Activated T-helper 2 cell treated with anti-CD3 and anti-CD28 coated beads, Interferon-gamma antibody, Interleukin-2, Interleukin-4, amounts not matched to agents 10 μg/mL and 5 μg/mL and 100 μg/mL, durations not matched to agents 14 hours and 24 hours and 36 hours (primary cell): ENCODE measurements at regions of chr2 and their contacts with region 1.

Region 1: DNA sequence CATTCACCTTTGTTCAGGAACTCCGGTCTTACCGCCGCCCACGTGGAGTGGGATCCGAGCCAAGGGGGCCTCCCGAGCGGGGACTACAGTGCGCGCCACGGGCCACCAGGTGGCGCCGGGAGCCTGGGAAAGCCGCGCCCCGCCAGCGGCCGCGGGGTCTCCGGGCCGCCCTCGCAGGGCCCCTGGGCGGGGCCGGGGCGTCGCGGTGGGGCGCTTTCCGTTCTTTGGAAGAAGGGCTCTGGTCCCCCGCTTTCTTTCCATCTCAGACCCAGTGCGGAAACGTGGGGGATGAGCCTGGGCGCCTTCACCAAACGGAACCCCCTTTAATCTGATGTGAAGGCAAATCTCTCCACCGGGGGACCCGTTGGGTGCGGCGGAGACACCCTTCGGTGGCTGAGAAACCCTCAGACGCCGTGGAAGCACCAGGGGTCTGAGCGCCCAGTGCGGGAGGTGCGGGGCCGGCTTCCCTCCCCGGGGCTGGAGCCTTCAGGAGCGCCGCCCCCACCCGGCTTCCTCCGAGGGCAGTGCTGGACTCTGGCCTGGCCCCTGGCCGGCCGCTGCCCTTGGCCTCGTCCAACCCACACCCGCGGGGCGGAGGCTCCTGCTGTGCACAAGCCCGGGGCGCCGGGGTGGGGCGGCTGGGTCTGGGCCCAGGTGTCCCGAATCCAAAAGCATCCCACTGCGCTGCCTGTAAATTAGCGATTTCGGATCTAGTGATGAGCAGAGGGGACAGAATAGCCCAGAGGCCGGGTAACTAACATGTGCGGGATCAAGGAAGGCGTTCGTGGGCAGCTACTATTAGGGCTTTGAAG is 44.6 kb downstream of the GORASP2 start:
- DNase-seq: peak; percentile 75
- H3K4me3 Mint-ChIP-seq: peak overlapping the region; percentile 76
- H3K27ac Mint-ChIP-seq: peak overlapping the region; percentile 63
- H3K4me1 Mint-ChIP-seq: peaks cover 10% of the 10 kb centered on the region
- H3K27me3 Mint-ChIP-seq: no peaks in the 10 kb centered on the region

Region 2: GRCh38 chr2:170950221-170950761 is 23.4 kb before region 1 on chr2:
- intact Hi-C with region 1: no loop called
- DNase-seq: no peak
- H3K4me3 Mint-ChIP-seq: no peak overlapping the region
- H3K27ac Mint-ChIP-seq: no peak overlapping the region
- H3K4me1 Mint-ChIP-seq: peaks cover 9% of the 10 kb centered on the region
- H3K27me3 Mint-ChIP-seq: no peaks in the 10 kb centered on the region

Region 3: DNA sequence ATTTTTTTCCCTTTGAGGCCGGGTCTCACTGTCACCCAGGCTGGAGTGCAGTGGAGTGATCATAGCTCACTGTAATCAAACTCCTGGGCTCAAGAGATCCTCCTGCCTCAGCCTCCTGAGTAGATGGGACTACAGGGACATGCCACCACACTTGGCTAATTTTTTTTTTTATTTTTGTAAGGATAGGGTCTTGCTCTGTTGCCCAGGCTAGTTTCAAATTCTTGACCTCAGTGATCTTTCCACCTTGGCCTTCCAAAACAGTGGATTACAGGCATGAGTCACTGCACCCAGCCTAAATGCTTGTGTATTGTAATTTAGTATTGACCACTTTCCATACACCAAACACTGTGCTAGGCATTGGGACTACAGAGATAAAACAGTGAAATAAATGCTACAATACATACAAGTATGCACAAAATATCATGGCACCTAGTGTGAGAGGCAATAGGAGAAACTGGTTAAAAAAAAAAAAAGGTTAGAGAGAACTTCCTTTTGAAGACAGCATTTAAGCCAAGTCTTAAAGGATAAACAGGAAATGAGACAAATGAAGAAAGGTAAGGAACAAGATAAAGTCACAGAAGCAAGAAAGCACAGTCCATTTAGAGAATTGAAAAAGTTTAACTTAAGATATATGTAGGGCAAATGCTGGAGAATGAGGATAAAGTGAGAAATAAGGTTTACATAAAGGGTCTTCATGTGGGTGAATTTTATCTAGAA is 68.7 kb after region 1 on chr2:
- intact Hi-C with region 1: no loop called
- DNase-seq: no peak
- H3K4me3 Mint-ChIP-seq: peak overlapping the region; percentile 10
- H3K27ac Mint-ChIP-seq: peak overlapping the region; percentile 79
- H3K4me1 Mint-ChIP-seq: peaks cover 27% of the 10 kb centered on the region
- H3K27me3 Mint-ChIP-seq: no peaks in the 10 kb centered on the region

Region 4: DNA sequence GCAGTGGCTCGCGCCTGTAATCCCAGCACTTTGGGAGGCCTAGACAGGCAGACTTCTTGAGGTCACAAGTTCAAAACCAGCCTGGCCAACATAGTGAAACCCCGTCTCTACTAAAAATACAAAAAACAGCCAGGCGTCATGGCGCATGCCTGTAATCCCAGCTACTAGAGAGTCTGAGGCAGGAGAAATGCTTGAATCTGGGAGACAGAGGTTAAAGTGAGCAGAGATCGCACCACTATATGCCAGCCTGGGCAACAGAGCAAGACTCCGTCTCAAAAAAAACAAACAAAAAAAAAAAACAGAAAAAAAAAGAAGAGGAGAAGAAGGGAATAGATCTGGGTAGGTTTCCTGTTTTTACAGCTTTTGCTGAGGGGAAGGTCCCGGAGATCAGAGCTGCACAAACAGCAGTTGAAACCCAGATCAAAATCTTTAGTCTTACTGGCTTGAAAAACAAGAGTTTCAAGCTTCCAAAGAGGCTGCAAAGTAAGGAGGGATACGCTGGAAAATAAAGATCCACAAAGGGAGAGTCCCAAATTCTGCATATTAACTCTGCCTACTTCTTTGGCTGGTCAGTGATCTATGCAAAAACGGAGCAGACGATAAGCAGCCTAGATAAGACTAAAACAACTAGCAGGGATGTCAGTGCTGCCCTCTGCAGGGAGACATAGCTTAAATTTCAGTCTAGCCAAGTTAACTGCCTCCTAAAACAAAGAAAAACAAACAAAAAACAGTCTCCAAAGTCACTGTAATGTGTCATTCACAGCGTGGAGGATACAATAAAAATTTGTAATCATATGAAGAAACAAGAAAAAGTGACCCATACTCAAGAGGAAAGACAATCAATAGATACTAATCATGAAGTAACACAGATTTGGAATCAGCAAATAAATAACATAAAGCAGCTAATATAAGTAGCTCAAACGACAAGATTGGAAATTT is 112.9 kb after region 1 on chr2:
- intact Hi-C with region 1: loop called (anchors 1 kb)
- DNase-seq: peak; percentile 33
- H3K4me3 Mint-ChIP-seq: peak overlapping the region; percentile 78
- H3K27ac Mint-ChIP-seq: peak overlapping the region; percentile 69
- H3K4me1 Mint-ChIP-seq: peaks cover 61% of the 10 kb centered on the region
- H3K27me3 Mint-ChIP-seq: no peaks in the 10 kb centered on the region

Region 5: DNA sequence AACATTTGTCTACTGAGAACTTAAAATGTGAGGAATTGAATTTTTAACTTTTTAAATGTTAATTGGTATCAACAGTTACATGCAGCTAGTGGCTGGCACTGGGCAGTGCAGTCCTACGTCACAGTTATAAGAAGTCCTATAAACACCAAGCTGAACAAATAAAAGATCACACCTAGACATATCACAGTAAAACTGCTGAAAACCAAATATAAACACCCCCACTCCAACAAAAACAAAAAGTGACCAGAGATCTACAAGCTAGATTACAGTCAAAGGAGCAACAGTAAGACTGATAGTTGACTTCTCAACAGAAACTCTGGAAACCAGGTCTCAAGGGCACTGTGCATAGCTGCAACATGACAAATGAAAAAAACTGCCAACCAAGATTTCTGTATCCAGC is 167.6 kb after region 1 on chr2:
- intact Hi-C with region 1: loop called (anchors 5 kb)
- DNase-seq: no peak
- H3K4me3 Mint-ChIP-seq: no peak overlapping the region
- H3K27ac Mint-ChIP-seq: no peak overlapping the region
- H3K4me1 Mint-ChIP-seq: peaks cover 52% of the 10 kb centered on the region
- H3K27me3 Mint-ChIP-seq: no peaks in the 10 kb centered on the region

Region 6: GRCh38 chr2:171244970-171245782 is 271.5 kb after region 1 on chr2:
- intact Hi-C with region 1: loop called (anchors 10 kb)
- DNase-seq: no peak
- H3K4me3 Mint-ChIP-seq: no peak overlapping the region
- H3K27ac Mint-ChIP-seq: no peak overlapping the region
- H3K4me1 Mint-ChIP-seq: peaks cover 40% of the 10 kb centered on the region
- H3K27me3 Mint-ChIP-seq: peaks cover 3% of the 10 kb centered on the region

Region 7: GRCh38 chr2:171433763-171434670 is 460.3 kb after region 1 on chr2 and contains the starts of genes DCAF17 and METTL8:
- intact Hi-C with region 1: loop called (anchors 1 kb)
- DNase-seq: peak; percentile 93
- H3K4me3 Mint-ChIP-seq: peak within 1 kb of the TSS; percentile 89
- H3K27ac Mint-ChIP-seq: peak within 1 kb of the TSS; percentile 91
- H3K4me1 Mint-ChIP-seq: peaks cover 32% of the 10 kb centered on the region
- H3K27me3 Mint-ChIP-seq: no peaks in the 10 kb centered on the region
- total RNA-seq, gene DCAF17: 22.6 and 23.7 TPM in 2 replicates
- total RNA-seq, gene METTL8: 38.2 and 39.9 TPM in 2 replicates